ENCODE measurements at regions of chr15 and their contacts with region 1.

Region 1: GRCh38 chr15:71448688-71449114 is 333.4 kb downstream of the THSD4 start:
- DNase-seq: peak; percentile 60 to 74
- H3K4me3 ChIP-seq: no peak overlapping the region
- H3K4me3 Mint-ChIP-seq: no peak overlapping the region
- H3K27ac Mint-ChIP-seq: no peak overlapping the region
- H3K4me1 ChIP-seq: peaks cover 9% of the 10 kb centered on the region
- H3K4me1 Mint-ChIP-seq: no peaks in the 10 kb centered on the region
- H3K27me3 ChIP-seq: no peaks in the 10 kb centered on the region
- H3K27me3 Mint-ChIP-seq: no peaks in the 10 kb centered on the region
- CTCF ChIP-seq: peak; percentile 77 to 83

Region 2: DNA sequence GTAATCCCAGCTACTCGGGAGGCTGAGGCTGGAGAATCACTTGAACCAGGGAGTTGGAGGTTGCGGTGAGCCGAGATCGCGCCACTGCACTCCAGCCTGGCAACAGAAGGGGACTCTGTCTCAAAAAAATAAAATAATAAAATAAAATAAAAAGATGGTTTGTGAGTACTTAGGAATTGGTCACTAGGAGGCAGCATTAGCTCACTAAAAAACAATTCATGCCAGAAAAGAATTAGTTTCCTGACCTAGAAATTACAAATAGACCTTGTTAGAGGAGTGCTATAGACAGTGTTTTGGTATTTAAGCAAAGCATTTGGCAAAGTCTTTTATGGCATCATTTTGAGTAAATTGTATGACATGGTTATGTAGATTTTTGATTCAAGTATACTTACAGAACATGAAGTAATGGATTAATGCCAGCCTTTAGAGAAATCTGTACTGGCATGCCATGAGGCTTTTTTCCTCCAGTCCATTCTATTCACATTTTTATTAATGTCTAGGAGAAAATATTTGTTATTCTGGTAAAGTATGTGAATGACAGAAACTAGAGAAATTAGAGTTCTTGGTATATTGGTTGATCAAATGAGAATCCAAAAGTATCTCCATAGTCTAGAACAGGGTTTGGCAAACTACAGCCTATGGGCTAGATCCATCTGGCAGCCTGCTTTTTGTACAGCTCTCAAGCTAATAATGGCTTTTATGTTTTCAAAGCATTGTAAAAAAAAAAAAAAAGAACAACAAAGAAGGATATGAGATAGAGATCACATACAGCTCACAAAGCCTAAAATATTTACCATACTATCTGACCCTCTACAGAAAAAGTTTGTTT is 474.5 kb before region 1 on chr15:
- CTCF ChIA-PET with region 1: no interaction called
- POLR2A ChIA-PET with region 1: no interaction called
- intact Hi-C with region 1: loop called (anchors 10 kb)
- DNase-seq: no peak
- H3K4me3 ChIP-seq: no peak overlapping the region
- H3K4me3 Mint-ChIP-seq: no peak overlapping the region
- H3K27ac Mint-ChIP-seq: no peak overlapping the region
- H3K4me1 ChIP-seq: no peaks in the 10 kb centered on the region
- H3K4me1 Mint-ChIP-seq: no peaks in the 10 kb centered on the region
- H3K27me3 ChIP-seq: no peaks in the 10 kb centered on the region
- H3K27me3 Mint-ChIP-seq: no peaks in the 10 kb centered on the region
- CTCF ChIP-seq: no peak

Region 3: DNA sequence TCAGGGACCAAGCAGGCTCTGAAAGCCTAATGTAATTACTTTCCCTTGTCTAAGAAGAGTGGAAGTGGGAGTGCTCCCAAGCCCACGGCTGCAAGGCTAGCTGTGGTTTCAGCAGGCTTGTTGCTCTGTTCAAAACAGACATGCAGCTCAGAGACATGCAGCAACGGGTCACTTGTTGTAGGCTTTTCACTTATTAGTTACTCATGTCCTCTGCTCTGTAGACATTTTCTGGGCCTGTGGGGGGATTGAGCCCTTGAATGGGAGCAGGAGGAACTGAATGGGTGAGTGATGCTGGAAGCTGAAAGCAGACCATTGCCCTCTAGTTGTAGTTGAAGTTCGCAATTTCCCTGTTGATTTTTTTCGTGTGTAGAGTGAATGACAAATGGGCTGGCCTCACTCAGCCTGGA is 99.7 kb after region 1 on chr15:
- CTCF ChIA-PET with region 1: no interaction called
- POLR2A ChIA-PET with region 1: no interaction called
- intact Hi-C with region 1: loop called (anchors 1 kb)
- DNase-seq: no peak
- H3K4me3 ChIP-seq: no peak overlapping the region
- H3K4me3 Mint-ChIP-seq: no peak overlapping the region
- H3K27ac Mint-ChIP-seq: no peak overlapping the region
- H3K4me1 ChIP-seq: no peaks in the 10 kb centered on the region
- H3K4me1 Mint-ChIP-seq: no peaks in the 10 kb centered on the region
- H3K27me3 ChIP-seq: no peaks in the 10 kb centered on the region
- H3K27me3 Mint-ChIP-seq: no peaks in the 10 kb centered on the region
- CTCF ChIP-seq: no peak

Region 4: GRCh38 chr15:71575474-71576045 is 126.9 kb after region 1 on chr15:
- CTCF ChIA-PET with region 1: no interaction called
- POLR2A ChIA-PET with region 1: no interaction called
- intact Hi-C with region 1: loop called (anchors 1 kb)
- DNase-seq: no peak
- H3K4me3 ChIP-seq: no peak overlapping the region
- H3K4me3 Mint-ChIP-seq: no peak overlapping the region
- H3K27ac Mint-ChIP-seq: no peak overlapping the region
- H3K4me1 ChIP-seq: no peaks in the 10 kb centered on the region
- H3K4me1 Mint-ChIP-seq: no peaks in the 10 kb centered on the region
- H3K27me3 ChIP-seq: no peaks in the 10 kb centered on the region
- H3K27me3 Mint-ChIP-seq: no peaks in the 10 kb centered on the region
- CTCF ChIP-seq: peak; percentile 51 to 65

Region 5: DNA sequence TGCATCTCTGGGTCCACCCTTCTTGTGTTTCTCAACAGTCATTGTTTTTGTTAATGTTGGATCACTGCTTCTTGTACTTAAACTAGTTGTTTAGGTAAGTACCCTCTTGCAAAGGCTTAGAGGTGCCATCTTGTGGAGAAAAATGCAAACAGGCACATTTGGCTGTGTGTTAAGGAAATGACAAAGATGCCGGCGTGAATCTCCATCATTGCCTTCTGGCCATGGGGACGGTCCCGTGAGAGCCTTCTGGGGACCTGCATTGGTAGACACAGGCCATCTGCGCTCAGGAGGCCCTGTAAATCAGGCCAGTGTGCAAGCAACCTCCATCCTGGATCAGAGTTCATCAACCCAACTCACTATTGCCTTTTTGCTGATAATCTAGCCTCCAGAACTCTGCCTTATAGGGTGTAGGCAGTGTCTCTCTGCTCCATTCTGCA is 203.1 kb after region 1 on chr15:
- CTCF ChIA-PET with region 1: no interaction called
- POLR2A ChIA-PET with region 1: no interaction called
- intact Hi-C with region 1: loop called (anchors 1 kb)
- DNase-seq: peak; percentile 59 to 63
- H3K4me3 ChIP-seq: no peak overlapping the region
- H3K4me3 Mint-ChIP-seq: no peak overlapping the region
- H3K27ac Mint-ChIP-seq: no peak overlapping the region
- H3K4me1 ChIP-seq: peaks cover 9% of the 10 kb centered on the region
- H3K4me1 Mint-ChIP-seq: peaks cover 6% of the 10 kb centered on the region
- H3K27me3 ChIP-seq: no peaks in the 10 kb centered on the region
- H3K27me3 Mint-ChIP-seq: no peaks in the 10 kb centered on the region
- CTCF ChIP-seq: peak; percentile 63 to 64

Region 6: DNA sequence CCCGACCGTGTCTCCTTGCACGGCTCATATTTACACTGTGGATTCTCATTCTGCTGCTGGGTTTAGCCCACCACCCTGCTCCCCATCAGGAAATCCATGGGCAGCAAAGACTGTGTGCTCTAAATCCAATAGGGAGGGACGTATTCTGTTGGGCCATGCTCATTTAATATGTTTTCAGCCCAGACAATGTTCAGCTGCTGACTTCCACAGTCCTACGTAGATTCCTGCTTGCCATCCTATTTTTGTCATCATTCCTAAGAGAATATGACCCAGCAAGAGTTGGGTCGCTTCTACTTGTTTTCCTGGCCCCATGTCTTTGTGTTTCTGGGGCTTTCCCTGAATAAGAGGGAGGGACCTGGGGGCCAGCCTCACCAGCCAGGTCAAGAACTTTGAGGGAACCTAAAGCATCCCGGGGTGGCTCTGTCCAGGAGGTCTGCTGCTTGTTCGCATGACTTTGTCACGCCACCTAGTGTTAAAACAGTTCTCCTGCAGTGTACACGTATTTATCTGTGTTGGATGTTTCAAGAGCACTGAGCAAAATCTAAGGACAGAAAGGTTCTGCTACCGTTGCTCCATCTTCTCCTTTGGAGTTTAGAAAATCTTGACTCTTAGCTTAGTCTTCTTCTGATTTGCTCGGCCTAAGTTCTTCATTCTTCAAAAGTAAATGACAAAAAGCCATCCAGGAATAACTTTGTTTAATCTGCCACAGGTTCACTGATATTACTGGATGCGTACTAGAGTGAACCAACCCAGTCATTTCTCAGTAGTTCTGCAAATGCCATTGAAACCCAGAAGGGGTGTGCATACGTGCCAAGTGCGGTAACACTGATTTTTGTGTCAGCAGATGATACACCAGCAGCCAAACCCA is 281.8 kb after region 1 on chr15:
- CTCF ChIA-PET with region 1: no interaction called
- POLR2A ChIA-PET with region 1: no interaction called
- intact Hi-C with region 1: loop called (anchors 1 kb)
- DNase-seq: peak; percentile 62 to 63
- H3K4me3 ChIP-seq: no peak overlapping the region
- H3K4me3 Mint-ChIP-seq: no peak overlapping the region
- H3K27ac Mint-ChIP-seq: no peak overlapping the region
- H3K4me1 ChIP-seq: peaks cover 16% of the 10 kb centered on the region
- H3K4me1 Mint-ChIP-seq: no peaks in the 10 kb centered on the region
- H3K27me3 ChIP-seq: no peaks in the 10 kb centered on the region
- H3K27me3 Mint-ChIP-seq: no peaks in the 10 kb centered on the region
- CTCF ChIP-seq: peak in 1 of 2 experiments; percentile 67

Region 7: GRCh38 chr15:71800835-71801745 is 352.4 kb after region 1 on chr15:
- CTCF ChIA-PET with region 1: no interaction called
- POLR2A ChIA-PET with region 1: no interaction called
- intact Hi-C with region 1: loop called (anchors 2 kb)
- DNase-seq: peak in 1 of 2 experiments; percentile 72
- H3K4me3 ChIP-seq: no peak overlapping the region
- H3K4me3 Mint-ChIP-seq: no peak overlapping the region
- H3K27ac Mint-ChIP-seq: no peak overlapping the region
- H3K4me1 ChIP-seq: no peaks in the 10 kb centered on the region
- H3K4me1 Mint-ChIP-seq: no peaks in the 10 kb centered on the region
- H3K27me3 ChIP-seq: no peaks in the 10 kb centered on the region
- H3K27me3 Mint-ChIP-seq: no peaks in the 10 kb centered on the region
- CTCF ChIP-seq: peak; percentile 80 to 91

Measured in Caco-2 (cell line).